ENCODE measurements at regions of chr1 and their contacts with region 1.

Region 1: DNA sequence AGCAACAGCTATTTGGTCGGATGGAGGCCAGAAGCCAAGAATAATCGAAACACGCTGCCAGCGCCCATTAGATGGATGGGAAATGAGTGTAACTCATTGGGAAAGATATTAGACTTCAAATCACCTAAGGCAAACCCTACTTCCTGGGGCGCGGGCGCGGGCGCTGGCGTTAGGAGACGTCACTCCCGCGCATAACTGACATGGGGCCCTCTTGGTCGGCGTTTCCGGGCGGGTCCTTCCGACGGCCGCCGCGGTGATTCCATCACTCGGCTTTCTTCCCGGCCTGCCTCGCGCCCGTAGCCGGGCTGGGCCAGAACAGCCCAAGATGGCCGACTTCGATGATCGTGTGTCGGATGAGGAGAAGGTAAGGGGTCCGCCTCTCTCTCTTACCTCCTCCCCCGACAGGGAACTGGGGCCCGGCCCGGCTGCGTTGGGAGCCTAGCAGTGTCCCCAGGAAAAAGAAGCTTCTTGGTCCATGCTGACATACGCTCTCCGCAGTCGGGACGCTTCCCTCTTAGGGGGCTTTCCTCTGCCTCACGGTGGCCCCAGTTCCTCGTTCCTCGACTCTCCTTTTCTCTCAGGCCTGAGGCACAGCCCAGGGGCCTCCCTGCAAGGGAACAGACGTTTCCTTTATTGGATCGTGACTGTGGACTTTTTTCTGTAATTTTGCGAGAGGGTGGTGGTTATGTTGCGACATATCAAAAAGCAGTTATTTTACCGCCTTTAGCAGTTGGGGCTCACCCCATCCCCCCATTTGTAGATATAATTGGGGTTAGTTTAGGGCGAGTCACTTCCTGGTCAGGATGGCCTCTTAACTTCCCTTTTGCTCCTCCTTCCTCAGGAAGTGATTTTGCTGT is at the start of gene CAPZA1:
- DNase-seq: peak; percentile 62
- ATAC-seq: peak; percentile 85
- H3K4me3 ChIP-seq: peak within 1 kb of the TSS; percentile 77
- H3K27ac ChIP-seq: peak within 1 kb of the TSS; percentile 100
- H3K4me1 ChIP-seq: peaks cover 4% of the 10 kb centered on the region
- H3K27me3 ChIP-seq: no peaks in the 10 kb centered on the region
- CTCF ChIP-seq: no peak
- EP300 ChIP-seq: peak in 1 of 2 experiments; percentile 32; a peak in 1 of 4 replicates
- POLR2A ChIP-seq: peak; percentile 93
- RAD21 ChIP-seq: no peak
- polyA plus RNA-seq, gene CAPZA1: 401 to 886 TPM

Region 2: DNA sequence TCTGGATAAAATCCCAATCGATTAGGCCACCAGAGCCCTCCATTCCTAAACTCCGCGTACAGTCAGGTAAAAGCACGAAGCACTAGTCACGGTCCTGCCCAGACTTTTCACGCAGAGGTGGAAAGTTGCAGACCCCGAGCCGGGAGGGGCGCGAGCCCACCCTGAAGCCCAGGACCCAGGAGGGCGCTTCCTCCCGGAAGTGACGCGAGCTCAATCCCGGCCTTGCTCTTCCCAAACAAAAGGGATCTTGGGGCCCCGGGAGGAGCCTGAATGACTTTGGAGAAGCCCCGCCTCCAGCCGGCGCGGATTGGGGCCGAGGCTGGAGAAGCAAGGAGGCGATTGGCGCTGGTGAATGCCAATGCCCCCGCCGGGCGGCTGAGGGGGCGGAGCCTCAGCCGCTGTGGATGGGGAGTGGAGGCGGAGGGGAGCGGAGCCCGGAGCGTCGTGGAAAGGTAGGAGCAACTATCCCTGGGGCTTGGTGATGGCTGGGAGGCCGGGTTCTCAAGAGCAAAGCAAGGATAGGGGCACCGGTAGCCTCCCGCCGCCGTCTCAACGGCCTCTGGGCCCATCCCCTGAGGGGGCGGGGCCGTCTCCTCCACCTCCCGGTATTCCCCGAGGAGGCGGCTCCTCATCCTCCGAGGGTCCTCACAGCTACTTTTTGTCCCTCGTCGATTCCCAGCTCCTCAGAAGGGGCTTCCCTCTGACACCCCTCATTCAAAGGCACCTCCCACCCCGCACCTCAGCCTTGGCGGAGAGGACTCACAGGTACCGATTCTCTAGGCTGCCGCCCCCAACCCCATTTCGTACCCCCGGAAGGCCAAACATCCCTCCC is 223.7 kb before region 1 on chr1 and contains the start of gene CTTNBP2NL:
- CTCF ChIA-PET with region 1: interaction called, 330 read pairs
- POLR2A ChIA-PET with region 1: interaction called, 14 read pairs
- RAD21 ChIA-PET with region 1: interaction called, 49 read pairs
- SMC1A ChIA-PET with region 1: interaction called, 125 read pairs
- in situ Hi-C with region 1: loop called (anchors 5 kb)
- intact Hi-C with region 1: loop called (anchors 1 kb)
- DNase-seq: no peak
- ATAC-seq: peak; percentile 85
- H3K4me3 ChIP-seq: peak within 1 kb of the TSS; percentile 97
- H3K27ac ChIP-seq: peak within 1 kb of the TSS; percentile 78
- H3K4me1 ChIP-seq: peaks cover 18% of the 10 kb centered on the region
- H3K27me3 ChIP-seq: no peaks in the 10 kb centered on the region
- CTCF ChIP-seq: no peak
- EP300 ChIP-seq: no peak
- POLR2A ChIP-seq: peak; percentile 28; the same call in 1 of the 2 replicates
- RAD21 ChIP-seq: no peak
- polyA plus RNA-seq, gene CTTNBP2NL: 2.1 to 5.7 TPM

Region 3: DNA sequence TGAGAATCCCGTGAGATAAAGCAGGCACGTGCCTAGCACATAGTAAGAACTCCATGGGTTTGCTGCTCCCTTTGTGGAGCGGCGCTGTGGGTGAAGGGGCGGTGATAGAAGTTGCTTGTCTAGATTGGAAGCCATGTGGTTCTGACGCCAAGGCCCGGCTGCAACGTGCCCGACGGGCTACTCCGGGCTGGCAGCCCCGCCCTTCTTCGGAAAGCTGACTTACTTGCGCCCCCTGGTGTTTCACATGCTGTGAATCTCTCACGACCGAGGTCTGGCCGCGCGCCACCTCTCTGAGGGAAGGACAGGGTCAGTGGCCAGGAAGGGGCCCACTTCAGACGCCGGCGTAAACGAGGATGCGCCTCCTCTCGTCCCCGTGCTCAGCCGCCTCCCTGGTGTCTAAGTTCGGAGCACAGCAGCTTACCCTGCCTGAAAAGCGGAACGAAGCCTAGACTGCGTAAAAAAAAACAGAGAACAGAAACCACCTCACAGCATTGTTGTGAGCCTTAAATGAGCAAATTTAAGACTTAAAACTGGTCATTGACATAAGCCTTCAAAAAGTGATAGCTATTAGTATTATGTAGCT is 153.6 kb before region 1 on chr1:
- CTCF ChIA-PET with region 1: interaction called, 27 read pairs
- POLR2A ChIA-PET with region 1: interaction called, 3 read pairs
- RAD21 ChIA-PET with region 1: interaction called, 8 read pairs
- SMC1A ChIA-PET with region 1: interaction called, 4 read pairs
- in situ Hi-C with region 1: no loop called
- intact Hi-C with region 1: loop called (anchors 2 kb)
- DNase-seq: peak; percentile 95
- ATAC-seq: peak; percentile 99
- H3K4me3 ChIP-seq: no peak overlapping the region
- H3K27ac ChIP-seq: peak overlapping the region; percentile 14
- H3K4me1 ChIP-seq: peaks cover 15% of the 10 kb centered on the region
- H3K27me3 ChIP-seq: no peaks in the 10 kb centered on the region
- CTCF ChIP-seq: peak; percentile 77 to 91 (median 81); a peak in 5 of 6 replicates
- EP300 ChIP-seq: peak; percentile 85 to 94; a peak in 3 of 4 replicates
- POLR2A ChIP-seq: peak; percentile 61
- RAD21 ChIP-seq: peak; percentile 72

Region 4: DNA sequence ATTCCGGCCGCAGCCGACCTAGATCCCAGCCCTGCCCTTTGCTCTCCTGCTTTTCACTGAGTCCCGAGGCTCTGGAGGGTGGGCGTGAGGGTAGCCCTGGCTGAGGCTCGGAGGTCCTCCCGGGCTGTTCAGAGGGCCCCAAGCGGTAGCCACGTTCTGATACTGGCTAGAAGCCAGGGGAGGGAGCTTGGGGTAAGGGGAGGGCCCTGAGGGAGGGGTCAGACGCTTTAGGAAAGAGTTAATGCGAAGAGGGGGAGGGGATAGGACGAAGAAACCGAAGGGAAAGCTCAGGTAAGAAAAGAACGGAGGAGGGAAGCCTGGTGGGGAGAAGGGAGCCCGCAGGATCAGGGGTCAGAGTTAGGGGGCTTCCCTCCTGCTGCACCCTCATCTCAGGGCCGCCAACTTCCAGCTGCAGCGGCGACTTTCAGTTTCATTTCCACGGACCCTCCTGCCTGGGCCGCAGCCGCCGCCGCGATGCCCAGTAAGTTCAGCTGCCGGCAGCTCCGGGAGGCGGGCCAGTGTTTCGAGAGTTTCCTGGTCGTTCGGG is 54.8 kb after region 1 on chr1 and contains the start of gene MOV10:
- CTCF ChIA-PET with region 1: interaction called, 5 read pairs
- POLR2A ChIA-PET with region 1: interaction called, 7 read pairs
- RAD21 ChIA-PET with region 1: interaction called, 26 read pairs
- SMC1A ChIA-PET with region 1: interaction called, 15 read pairs
- in situ Hi-C with region 1: no loop called
- intact Hi-C with region 1: loop called (anchors 2 kb)
- DNase-seq: peak; percentile 40
- ATAC-seq: peak; percentile 81
- H3K4me3 ChIP-seq: peak within 1 kb of the TSS; percentile 86
- H3K27ac ChIP-seq: peak within 1 kb of the TSS; percentile 81
- H3K4me1 ChIP-seq: peaks cover 9% of the 10 kb centered on the region
- H3K27me3 ChIP-seq: no peaks in the 10 kb centered on the region
- CTCF ChIP-seq: no peak
- EP300 ChIP-seq: 0 out of 4 replicates have a peak, but pooled peaks of 1 of the 2 experiments have one; percentile 16
- POLR2A ChIP-seq: peak; percentile 74
- RAD21 ChIP-seq: no peak
- polyA plus RNA-seq, gene MOV10: 21.0 to 28.6 TPM

Measured in GM12878 (cell line).